Naive thymus-derived CD4-positive, alpha-beta T cell (primary cell): ENCODE measurements at regions of chr1 and their contacts with region 1.

Region 1: DNA sequence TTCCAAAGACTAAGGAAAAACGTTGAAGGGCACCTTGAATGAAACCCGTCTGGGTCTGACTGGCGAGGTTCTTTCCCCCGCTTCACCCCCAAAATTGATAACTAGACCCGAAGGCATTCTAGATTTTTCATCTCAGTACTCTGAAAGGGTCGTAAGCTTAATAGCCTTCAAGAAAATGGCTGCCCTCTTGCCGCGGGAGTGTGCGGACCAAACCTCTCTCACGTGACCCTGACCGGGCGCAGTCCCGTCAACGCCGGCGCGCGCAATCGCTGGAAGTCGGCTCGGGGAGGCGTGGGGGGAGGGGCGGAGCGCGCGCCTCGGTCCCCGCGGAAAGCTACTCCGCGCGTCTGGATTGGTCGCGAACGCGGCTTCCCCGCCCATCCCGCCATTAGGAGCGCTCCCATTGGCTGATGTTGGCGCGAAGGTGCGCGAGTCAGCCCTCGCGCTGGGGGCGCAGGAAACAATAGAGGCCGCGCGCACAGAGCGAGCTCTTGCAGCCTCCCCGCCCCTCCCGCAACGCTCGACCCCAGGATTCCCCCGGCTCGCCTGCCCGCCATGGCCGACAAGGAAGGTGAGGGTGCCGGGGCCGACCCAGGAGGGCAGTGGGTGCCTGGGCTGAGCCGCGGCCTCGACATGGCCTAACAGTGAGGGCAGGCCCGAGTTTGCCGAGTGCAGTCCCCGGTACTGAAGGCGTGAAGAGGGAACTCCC is at the start of gene RBBP4:
- DNase-seq: peak; percentile 95 to 99 (median 98)
- ATAC-seq: peak; percentile 91
- H3K4me3 ChIP-seq: peak within 1 kb of the TSS; percentile 87
- H3K4me3 Mint-ChIP-seq: peak within 1 kb of the TSS; percentile 91 to 99 (median 94)
- H3K27ac ChIP-seq: peak within 1 kb of the TSS; percentile 86
- H3K27ac Mint-ChIP-seq: peak within 1 kb of the TSS; percentile 97 to 100 (median 99)
- H3K4me1 ChIP-seq: peaks cover 42 to 45% of the 10 kb centered on the region in 2 donors
- H3K4me1 Mint-ChIP-seq: peaks cover 28 to 73% (median 60%) of the 10 kb centered on the region in 7 donors
- H3K27me3 ChIP-seq: no peaks in the 10 kb centered on the region
- H3K27me3 Mint-ChIP-seq: peaks cover 0 to 2% (median 0%) of the 10 kb centered on the region in 5 donors
- total RNA-seq, gene RBBP4: 130 to 280 (median 162) TPM

Region 2: DNA sequence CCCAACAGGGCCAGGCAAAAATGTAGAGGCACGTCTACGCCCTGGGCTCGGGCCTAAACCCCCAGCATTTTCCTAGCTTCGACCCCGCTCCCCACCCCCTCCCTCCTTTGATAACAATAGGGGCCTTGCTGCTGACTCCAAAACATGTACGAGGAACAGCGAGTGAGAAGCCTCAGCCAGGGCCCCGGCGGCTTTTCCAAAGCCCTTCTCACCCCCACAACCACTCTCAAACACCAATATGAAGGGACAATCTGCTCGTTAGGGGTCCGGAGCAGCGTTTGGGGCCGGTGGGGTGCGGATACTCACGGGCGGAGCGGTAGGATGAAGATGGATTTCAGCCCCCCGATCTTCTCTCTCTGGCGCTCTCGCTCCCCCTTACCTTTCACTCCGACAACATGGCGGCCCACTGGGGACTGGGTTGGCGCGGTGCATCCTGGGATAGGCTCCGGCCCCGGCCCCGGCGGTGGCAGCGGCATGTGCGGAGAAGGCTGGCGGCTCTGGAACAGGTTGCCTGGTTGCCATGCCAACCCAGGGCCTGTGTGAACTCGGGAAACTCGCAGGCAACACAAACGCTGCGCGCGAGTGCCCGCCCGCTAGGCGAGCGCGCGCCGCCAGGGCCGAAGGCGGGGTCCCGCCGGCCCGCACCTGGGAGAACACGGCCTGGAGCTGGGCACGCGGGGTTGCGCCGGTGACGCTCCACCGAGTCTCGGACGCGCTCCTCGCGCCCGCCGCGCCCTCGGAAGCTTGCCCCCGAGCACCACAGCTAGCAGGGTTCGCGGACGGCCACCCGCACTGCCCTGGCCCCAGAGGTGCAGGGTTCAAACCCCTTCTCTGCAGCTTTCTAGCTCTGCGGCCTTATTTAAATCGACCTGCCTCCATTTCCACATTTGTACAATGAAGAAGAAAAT is 1585.3 kb before region 1 on chr1 and contains the start of gene PUM1:
- CTCF ChIA-PET with region 1: no interaction called
- POLR2A ChIA-PET with region 1: no interaction called
- intact Hi-C with region 1: loop called in 1 of 2 experiments (anchors 2 kb)
- DNase-seq: peak; percentile 95 to 99 (median 97)
- ATAC-seq: peak; percentile 99
- H3K4me3 ChIP-seq: peak within 1 kb of the TSS; percentile 97
- H3K4me3 Mint-ChIP-seq: peak within 1 kb of the TSS; percentile 96 to 100 (median 98)
- H3K27ac ChIP-seq: peak within 1 kb of the TSS; percentile 95
- H3K27ac Mint-ChIP-seq: peak within 1 kb of the TSS; percentile 97 to 99 (median 98)
- H3K4me1 ChIP-seq: peaks cover 10 to 18% of the 10 kb centered on the region in 2 donors
- H3K4me1 Mint-ChIP-seq: peaks cover 20 to 38% (median 29%) of the 10 kb centered on the region in 7 donors
- H3K27me3 ChIP-seq: no peaks in the 10 kb centered on the region
- H3K27me3 Mint-ChIP-seq: no peaks in the 10 kb centered on the region
- total RNA-seq, gene PUM1: 114 to 226 (median 174) TPM

Region 3: GRCh38 chr1:32072622-32073298 is 578.1 kb before region 1 on chr1 and contains the start of gene TMEM39B:
- CTCF ChIA-PET with region 1: no interaction called
- POLR2A ChIA-PET with region 1: interaction called, 5 read pairs
- intact Hi-C with region 1: loop called in 1 of 2 experiments (anchors 1 kb)
- DNase-seq: peak; percentile 90 to 97 (median 96)
- ATAC-seq: peak; percentile 92
- H3K4me3 ChIP-seq: peak within 1 kb of the TSS; percentile 98
- H3K4me3 Mint-ChIP-seq: peak within 1 kb of the TSS; percentile 83 to 94 (median 91)
- H3K27ac ChIP-seq: peak within 1 kb of the TSS; percentile 82
- H3K27ac Mint-ChIP-seq: peak within 1 kb of the TSS; percentile 84 to 95 (median 92)
- H3K4me1 ChIP-seq: peaks cover 5 to 16% of the 10 kb centered on the region in 2 donors
- H3K4me1 Mint-ChIP-seq: peaks cover 21 to 58% (median 47%) of the 10 kb centered on the region in 7 donors
- H3K27me3 ChIP-seq: no peaks in the 10 kb centered on the region
- H3K27me3 Mint-ChIP-seq: no peaks in the 10 kb centered on the region
- total RNA-seq, gene TMEM39B: 11.4 to 35.9 (median 26.4) TPM

Region 4: GRCh38 chr1:32351399-32352238 is 299.3 kb before region 1 on chr1:
- CTCF ChIA-PET with region 1: no interaction called
- POLR2A ChIA-PET with region 1: interaction called, 3 read pairs
- intact Hi-C with region 1: loop called in 1 of 2 experiments (anchors 2 kb)
- DNase-seq: peak; percentile 83 to 93 (median 92)
- ATAC-seq: peak; percentile 97
- H3K4me3 ChIP-seq: peak overlapping the region; percentile 62
- H3K4me3 Mint-ChIP-seq: peak overlapping the region; percentile 68 to 90 (median 85)
- H3K27ac ChIP-seq: peak overlapping the region; percentile 75
- H3K27ac Mint-ChIP-seq: peak overlapping the region; percentile 63 to 96 (median 91)
- H3K4me1 ChIP-seq: peaks cover 4 to 19% of the 10 kb centered on the region in 2 donors
- H3K4me1 Mint-ChIP-seq: peaks cover 35 to 65% (median 53%) of the 10 kb centered on the region in 7 donors
- H3K27me3 ChIP-seq: no peaks in the 10 kb centered on the region
- H3K27me3 Mint-ChIP-seq: peaks cover 0 to under 1% (median 0%) of the 10 kb centered on the region in 5 donors

Region 5: DNA sequence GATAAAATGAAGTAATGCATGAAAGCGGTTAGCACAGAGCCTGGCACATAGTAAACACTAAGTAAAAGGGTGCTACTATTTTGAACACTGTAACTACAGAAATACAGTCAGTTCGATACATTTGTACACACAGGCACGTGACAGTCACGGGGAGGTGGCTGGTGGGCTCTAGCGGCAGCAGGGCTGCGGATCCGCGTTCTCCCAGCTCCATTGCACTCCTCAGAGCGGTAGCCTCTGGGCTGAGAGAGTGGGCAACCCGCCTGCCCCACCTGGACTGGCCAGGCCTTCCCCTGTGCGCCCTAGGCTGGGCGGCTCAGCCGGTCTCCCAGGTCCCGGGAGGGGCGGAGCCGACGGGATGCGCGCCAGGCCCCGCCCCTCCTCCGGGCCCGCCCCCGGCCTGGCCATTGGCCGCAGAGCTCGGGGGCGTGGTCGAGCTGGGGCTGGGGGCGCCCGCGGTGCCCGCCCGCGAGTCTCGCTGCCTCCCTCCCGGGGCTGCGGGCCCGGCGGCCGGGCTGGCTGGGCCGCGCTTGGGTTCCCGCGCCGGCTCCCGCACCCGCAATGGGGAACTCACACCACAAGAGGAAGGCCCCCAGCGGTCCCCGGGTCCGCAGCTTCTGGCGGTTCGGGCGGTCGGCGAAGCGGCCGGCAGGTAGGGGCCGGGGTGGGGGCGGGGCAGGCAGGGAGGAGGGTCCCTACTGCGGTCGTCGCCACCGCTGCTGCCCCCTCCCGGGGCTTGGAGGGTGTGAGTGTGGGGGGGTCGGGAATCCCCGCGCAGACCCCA is 102.8 kb after region 1 on chr1:
- CTCF ChIA-PET with region 1: no interaction called
- POLR2A ChIA-PET with region 1: no interaction called
- intact Hi-C with region 1: loop called in 1 of 2 experiments (anchors 1 kb)
- DNase-seq: peak; percentile 51 to 81 (median 66)
- ATAC-seq: peak; percentile 90
- H3K4me3 ChIP-seq: peak overlapping the region; percentile 65
- H3K4me3 Mint-ChIP-seq: peak overlapping the region; percentile 75 to 91 (median 82)
- H3K27ac ChIP-seq: peak overlapping the region; percentile 39
- H3K27ac Mint-ChIP-seq: peak overlapping the region in 7 of 9 donors; percentile 70 to 91 (median 83)
- H3K4me1 ChIP-seq: peaks cover under 1 to 4% of the 10 kb centered on the region in 2 donors
- H3K4me1 Mint-ChIP-seq: peaks cover 0 to 29% (median 17%) of the 10 kb centered on the region in 7 donors
- H3K27me3 ChIP-seq: no peaks in the 10 kb centered on the region
- H3K27me3 Mint-ChIP-seq: peaks cover 0 to 53% (median 4%) of the 10 kb centered on the region in 5 donors

Region 6: DNA sequence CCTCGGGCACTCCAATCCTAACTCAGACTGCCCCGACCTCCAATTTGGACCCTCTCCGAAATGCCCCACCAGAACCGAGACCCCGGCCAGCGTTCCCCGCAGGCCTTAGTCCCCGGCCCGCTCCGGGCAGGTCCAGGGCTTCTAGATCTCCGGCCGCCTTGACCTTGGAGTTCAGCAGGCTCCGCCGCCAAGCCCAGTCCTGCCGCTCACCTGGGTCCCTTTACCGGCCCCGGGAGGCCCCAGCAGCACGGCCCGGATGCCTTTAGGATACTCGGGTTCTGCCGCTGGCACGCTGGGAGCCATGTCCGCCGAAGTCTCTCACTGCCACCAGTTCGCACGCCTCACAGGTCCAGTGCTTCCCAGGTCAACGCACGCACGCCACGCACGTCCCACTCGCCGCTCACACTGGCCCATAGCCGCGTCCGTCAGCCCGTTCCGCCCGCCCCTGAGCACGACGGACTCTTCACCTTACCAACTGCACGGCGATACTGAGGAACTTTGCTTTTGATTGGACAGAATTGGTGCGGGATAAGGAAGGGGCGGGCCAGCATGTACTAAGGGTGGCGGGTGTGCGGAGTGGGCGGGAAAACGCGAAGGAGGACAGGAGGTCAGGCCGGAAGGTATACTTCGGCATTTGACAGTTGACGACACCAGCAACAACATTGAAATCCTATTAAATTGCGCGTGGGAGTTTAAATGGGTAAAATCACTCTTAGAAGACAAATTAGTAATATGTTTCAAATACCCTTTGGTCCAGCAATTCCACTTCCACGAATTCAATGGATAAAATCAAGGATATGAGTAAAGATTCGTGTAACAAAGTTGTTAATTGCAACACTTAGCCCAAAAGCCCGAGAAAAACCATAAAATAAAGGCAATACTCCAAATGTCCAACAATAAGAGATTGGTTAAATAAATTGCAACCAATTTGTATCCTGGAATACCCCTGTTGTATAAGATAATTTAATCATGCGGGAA is 385.9 kb after region 1 on chr1 and contains the start of gene AK2:
- CTCF ChIA-PET with region 1: no interaction called
- POLR2A ChIA-PET with region 1: no interaction called
- intact Hi-C with region 1: loop called in 1 of 2 experiments (anchors 1 kb)
- DNase-seq: peak; percentile 63 to 91 (median 84)
- ATAC-seq: peak; percentile 100
- H3K4me3 ChIP-seq: peak within 1 kb of the TSS; percentile 70
- H3K4me3 Mint-ChIP-seq: peak within 1 kb of the TSS; percentile 92 to 99 (median 96)
- H3K27ac ChIP-seq: peak within 1 kb of the TSS; percentile 73
- H3K27ac Mint-ChIP-seq: peak within 1 kb of the TSS; percentile 74 to 96 (median 89)
- H3K4me1 ChIP-seq: peaks cover 11 to 24% of the 10 kb centered on the region in 2 donors
- H3K4me1 Mint-ChIP-seq: peaks cover 35 to 50% (median 46%) of the 10 kb centered on the region in 7 donors
- H3K27me3 ChIP-seq: no peaks in the 10 kb centered on the region
- H3K27me3 Mint-ChIP-seq: peaks cover 0 to 1% (median 0%) of the 10 kb centered on the region in 5 donors
- total RNA-seq, gene AK2: 53.8 to 219 (median 90.2) TPM

Region 7: DNA sequence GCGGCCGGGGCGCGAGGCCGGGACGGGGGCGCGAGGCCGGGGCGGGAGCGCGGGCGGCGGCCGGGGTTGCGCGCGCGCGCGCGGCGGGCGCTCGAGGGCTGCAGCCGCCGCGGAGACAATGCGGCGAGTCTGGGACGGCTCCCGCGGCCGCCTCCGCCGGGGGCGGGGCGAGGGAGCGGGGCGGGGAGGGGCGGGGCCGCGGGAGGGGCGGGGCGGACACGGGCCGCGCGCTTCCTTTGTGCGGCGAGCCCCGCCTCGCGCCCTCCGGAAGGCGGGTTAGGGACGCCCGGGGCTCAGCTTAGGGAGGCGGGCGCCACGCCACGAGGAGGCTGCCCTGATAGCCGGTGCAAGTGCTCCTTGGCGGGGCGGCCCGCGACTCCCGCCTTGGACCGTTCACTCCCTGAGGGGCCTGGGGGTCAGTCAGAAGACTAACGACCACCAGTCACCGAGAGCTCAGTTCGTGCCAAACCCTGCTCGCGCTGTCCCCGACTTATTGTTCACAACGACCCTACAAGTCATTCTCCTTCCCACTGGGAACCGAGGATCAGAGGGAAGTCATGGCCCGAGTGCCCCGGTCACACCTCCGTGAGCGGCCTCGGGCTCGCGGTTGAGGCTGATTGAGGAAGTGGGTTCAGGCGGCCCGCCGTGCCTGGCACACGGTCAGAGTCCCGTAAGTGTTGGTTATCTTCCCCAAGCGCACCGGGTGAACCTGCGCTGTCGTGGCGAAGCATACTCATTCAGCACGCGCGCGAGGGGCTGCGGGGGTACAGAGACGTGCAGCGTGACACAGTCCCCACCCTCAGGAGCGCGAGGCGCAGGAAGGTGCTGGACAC is 699.1 kb after region 1 on chr1:
- CTCF ChIA-PET with region 1: no interaction called
- POLR2A ChIA-PET with region 1: no interaction called
- intact Hi-C with region 1: loop called in 1 of 2 experiments (anchors 2 kb)
- DNase-seq: peak; percentile 64 to 85 (median 73)
- ATAC-seq: peak; percentile 93
- H3K4me3 ChIP-seq: peak overlapping the region; percentile 96
- H3K4me3 Mint-ChIP-seq: peak overlapping the region; percentile 89 to 95 (median 92)
- H3K27ac ChIP-seq: peak overlapping the region; percentile 69
- H3K27ac Mint-ChIP-seq: peak overlapping the region; percentile 54 to 91 (median 88)
- H3K4me1 ChIP-seq: peaks cover 23 to 25% of the 10 kb centered on the region in 2 donors
- H3K4me1 Mint-ChIP-seq: peaks cover 32 to 51% (median 46%) of the 10 kb centered on the region in 7 donors
- H3K27me3 ChIP-seq: no peaks in the 10 kb centered on the region
- H3K27me3 Mint-ChIP-seq: peaks cover 0 to 7% (median 0%) of the 10 kb centered on the region in 5 donors

Region 8: GRCh38 chr1:33573661-33574060 is 922.8 kb after region 1 on chr1:
- CTCF ChIA-PET with region 1: no interaction called
- POLR2A ChIA-PET with region 1: no interaction called
- intact Hi-C with region 1: no loop called
- DNase-seq: no peak
- ATAC-seq: no peak
- H3K4me3 ChIP-seq: no peak overlapping the region
- H3K4me3 Mint-ChIP-seq: no peak overlapping the region
- H3K27ac ChIP-seq: no peak overlapping the region
- H3K27ac Mint-ChIP-seq: no peak overlapping the region
- H3K4me1 ChIP-seq: no peaks in the 10 kb centered on the region
- H3K4me1 Mint-ChIP-seq: peaks cover 0 to 4% (median 0%) of the 10 kb centered on the region in 7 donors
- H3K27me3 ChIP-seq: no peaks in the 10 kb centered on the region
- H3K27me3 Mint-ChIP-seq: peaks cover 7 to 50% (median 37%) of the 10 kb centered on the region in 5 donors

Region 9: DNA sequence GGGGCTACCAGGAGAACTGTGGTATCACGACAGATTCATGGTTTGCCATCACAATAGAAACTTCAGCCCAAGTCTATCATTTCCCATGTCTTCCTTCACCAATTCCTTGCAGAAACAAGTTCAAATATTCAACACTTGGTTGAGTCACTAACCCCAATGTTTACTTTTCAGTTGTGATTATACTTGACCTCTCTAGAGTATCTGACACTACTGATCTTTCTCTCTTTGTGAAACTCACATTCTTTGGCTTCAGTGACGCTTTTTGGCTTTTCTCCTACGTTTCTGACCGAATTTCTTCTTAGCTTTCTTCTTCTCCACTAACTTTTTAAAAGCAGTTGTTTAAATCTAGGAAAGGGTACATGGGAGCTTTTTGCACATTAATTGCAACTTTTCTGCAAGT is 1164.2 kb after region 1 on chr1:
- CTCF ChIA-PET with region 1: no interaction called
- POLR2A ChIA-PET with region 1: no interaction called
- intact Hi-C with region 1: no loop called
- DNase-seq: no peak
- ATAC-seq: no peak
- H3K4me3 ChIP-seq: no peak overlapping the region
- H3K4me3 Mint-ChIP-seq: no peak overlapping the region
- H3K27ac ChIP-seq: no peak overlapping the region
- H3K27ac Mint-ChIP-seq: no peak overlapping the region
- H3K4me1 ChIP-seq: no peaks in the 10 kb centered on the region
- H3K4me1 Mint-ChIP-seq: no peaks in the 10 kb centered on the region
- H3K27me3 ChIP-seq: no peaks in the 10 kb centered on the region
- H3K27me3 Mint-ChIP-seq: peaks cover 5 to 33% (median 23%) of the 10 kb centered on the region in 5 donors